HepG2 (cell line): ENCODE measurements at regions of chr12 and their contacts with region 1.

Region 1: GRCh38 chr12:12376646-12377448 is 20.0 kb downstream of the BORCS5 start:
- DNase-seq: peak; percentile 81
- ATAC-seq: peak; percentile 81
- H3K4me3 ChIP-seq: no peak overlapping the region
- H3K27ac ChIP-seq: no peak overlapping the region
- H3K4me1 ChIP-seq: peaks cover 61% of the 10 kb centered on the region
- H3K27me3 ChIP-seq: no peaks in the 10 kb centered on the region
- CTCF ChIP-seq: peak; percentile 80
- EP300 ChIP-seq: no peak
- POLR2A ChIP-seq: no peak
- RAD21 ChIP-seq: peak; percentile 91

Region 2: GRCh38 chr12:12486661-12487240 is 109.9 kb after region 1 on chr12:
- CTCF ChIA-PET with region 1: no interaction called
- POLR2A ChIA-PET with region 1: no interaction called
- in situ Hi-C with region 1: no loop called
- intact Hi-C with region 1: loop called (anchors 5 kb)
- DNase-seq: peak; percentile 39
- ATAC-seq: peak; percentile 71
- H3K4me3 ChIP-seq: no peak overlapping the region
- H3K27ac ChIP-seq: peak overlapping the region; percentile 70
- H3K4me1 ChIP-seq: peaks cover 53% of the 10 kb centered on the region
- H3K27me3 ChIP-seq: no peaks in the 10 kb centered on the region
- CTCF ChIP-seq: no peak
- EP300 ChIP-seq: peak in 1 of 2 experiments; percentile 50; a peak in 2 of 4 replicates
- POLR2A ChIP-seq: no peak
- RAD21 ChIP-seq: 0 out of 2 replicates have a peak, but pooled peaks have one; percentile 13

Region 3: GRCh38 chr12:12562585-12563261 is 185.9 kb after region 1 on chr12 and contains the start of gene DUSP16:
- CTCF ChIA-PET with region 1: interaction called, 21 read pairs
- POLR2A ChIA-PET with region 1: interaction called, 5 read pairs
- in situ Hi-C with region 1: no loop called
- intact Hi-C with region 1: loop called (anchors 1 kb)
- DNase-seq: peak; percentile 96
- ATAC-seq: peak; percentile 95
- H3K4me3 ChIP-seq: peak within 1 kb of the TSS; percentile 79 to 90 (median 87)
- H3K27ac ChIP-seq: peak within 1 kb of the TSS; percentile 93
- H3K4me1 ChIP-seq: peaks cover 29% of the 10 kb centered on the region
- H3K27me3 ChIP-seq: no peaks in the 10 kb centered on the region; a peak in 1 of 5 replicates
- CTCF ChIP-seq: peak; percentile 47
- EP300 ChIP-seq: no peak
- POLR2A ChIP-seq: peak; percentile 64 to 68
- RAD21 ChIP-seq: peak; percentile 52
- total RNA-seq, gene DUSP16: 46.6 and 69.1 TPM in 2 replicates

Region 4: DNA sequence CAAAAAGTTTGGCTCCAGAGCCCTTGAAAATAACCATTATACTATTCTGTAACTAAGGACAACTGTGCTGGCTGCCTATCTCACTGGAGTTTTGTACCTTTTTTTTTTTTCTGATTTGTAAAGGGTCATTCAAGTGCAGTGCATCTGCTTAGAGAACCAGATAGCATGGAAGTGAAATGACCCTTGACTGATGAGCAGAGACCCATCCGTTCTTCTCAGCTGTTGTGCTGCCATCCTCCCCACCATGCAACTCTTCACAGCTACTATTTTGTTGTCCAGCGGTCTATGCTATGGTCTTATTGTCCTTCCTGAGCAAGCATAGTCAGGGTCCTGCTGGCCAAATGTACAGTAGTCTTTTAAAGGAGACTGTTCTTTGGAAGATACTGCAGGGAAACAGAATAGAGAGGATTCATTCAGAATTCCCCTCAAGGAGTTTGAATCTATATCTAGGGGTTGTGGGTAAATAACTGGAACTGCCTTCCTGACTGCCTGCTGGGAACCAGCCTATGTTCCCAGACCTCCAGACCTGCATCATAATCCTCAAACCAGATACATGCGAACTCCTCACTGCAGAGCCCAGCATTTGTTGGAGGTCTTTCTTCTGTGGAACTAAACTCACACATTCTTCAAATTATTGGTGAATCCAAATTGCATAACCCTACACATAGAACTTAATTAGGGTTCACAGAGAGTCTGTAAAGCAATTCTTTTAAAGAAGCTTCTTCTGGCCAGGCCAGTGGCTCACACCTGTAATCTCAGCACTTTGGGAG is 278.0 kb after region 1 on chr12:
- CTCF ChIA-PET with region 1: interaction called, 11 read pairs
- POLR2A ChIA-PET with region 1: no interaction called
- in situ Hi-C with region 1: no loop called
- intact Hi-C with region 1: loop called (anchors 1 kb)
- DNase-seq: no peak
- ATAC-seq: no peak
- H3K4me3 ChIP-seq: no peak overlapping the region
- H3K27ac ChIP-seq: no peak overlapping the region
- H3K4me1 ChIP-seq: peaks cover 13% of the 10 kb centered on the region
- H3K27me3 ChIP-seq: no peaks in the 10 kb centered on the region
- CTCF ChIP-seq: no peak
- EP300 ChIP-seq: no peak
- POLR2A ChIP-seq: no peak
- RAD21 ChIP-seq: no peak

Region 5: GRCh38 chr12:12661086-12661485 is 284.2 kb after region 1 on chr12:
- CTCF ChIA-PET with region 1: interaction called, 11 read pairs
- POLR2A ChIA-PET with region 1: no interaction called
- in situ Hi-C with region 1: no loop called
- intact Hi-C with region 1: loop called (anchors 1 kb)
- DNase-seq: no peak
- ATAC-seq: no peak
- H3K4me3 ChIP-seq: no peak overlapping the region
- H3K27ac ChIP-seq: no peak overlapping the region
- H3K4me1 ChIP-seq: no peaks in the 10 kb centered on the region
- H3K27me3 ChIP-seq: no peaks in the 10 kb centered on the region
- CTCF ChIP-seq: no peak
- EP300 ChIP-seq: no peak
- POLR2A ChIP-seq: no peak
- RAD21 ChIP-seq: no peak

Region 6: DNA sequence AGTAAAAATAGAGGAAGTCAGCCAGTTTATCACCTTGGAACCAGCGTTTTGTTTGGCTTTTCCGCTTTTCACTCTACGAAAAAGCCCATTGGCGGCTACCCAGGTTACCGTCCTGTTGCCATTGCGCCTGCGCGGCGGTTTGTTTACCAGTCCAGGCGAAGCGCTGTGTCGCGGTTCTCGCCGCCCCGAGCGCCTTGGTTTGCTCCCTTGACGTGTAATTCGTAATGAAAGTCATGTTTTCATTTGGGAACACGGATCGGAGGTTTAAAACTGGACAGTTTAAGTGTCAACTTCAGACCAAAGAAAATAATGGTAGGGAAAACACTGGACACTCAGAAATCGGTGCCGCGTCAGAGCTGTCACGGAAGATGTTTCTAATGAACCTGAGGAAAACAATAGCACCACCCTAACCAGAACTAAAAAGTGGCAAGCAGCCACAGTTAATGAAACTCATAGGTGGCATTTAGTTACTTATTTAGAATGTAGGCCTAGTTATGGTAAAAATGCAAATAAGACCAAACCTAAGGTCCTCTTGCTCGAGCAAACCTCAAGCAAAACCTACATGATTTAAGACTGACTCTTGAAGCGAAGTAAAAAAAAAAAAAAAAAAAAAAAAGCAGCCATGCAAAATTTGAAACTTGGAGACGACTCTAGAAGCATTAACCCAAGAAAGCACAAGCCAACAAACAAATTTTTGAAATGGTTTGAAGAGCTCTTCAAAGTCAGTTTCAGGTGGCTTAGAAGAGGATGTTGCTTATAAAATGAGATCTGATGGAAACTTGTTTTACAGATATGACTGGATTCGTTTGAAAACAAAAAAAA is 319.9 kb after region 1 on chr12:
- CTCF ChIA-PET with region 1: no interaction called
- POLR2A ChIA-PET with region 1: no interaction called
- in situ Hi-C with region 1: no loop called
- intact Hi-C with region 1: loop called (anchors 1 kb)
- DNase-seq: peak; percentile 73
- ATAC-seq: peak; percentile 95
- H3K4me3 ChIP-seq: peak overlapping the region; percentile 66 to 68 (median 67)
- H3K27ac ChIP-seq: peak overlapping the region; percentile 87
- H3K4me1 ChIP-seq: peaks cover 18% of the 10 kb centered on the region
- H3K27me3 ChIP-seq: no peaks in the 10 kb centered on the region; a peak in 1 of 5 replicates
- CTCF ChIP-seq: no peak
- EP300 ChIP-seq: no peak
- POLR2A ChIP-seq: peak; percentile 30 to 58; a peak in 3 of 4 replicates
- RAD21 ChIP-seq: no peak

Region 7: DNA sequence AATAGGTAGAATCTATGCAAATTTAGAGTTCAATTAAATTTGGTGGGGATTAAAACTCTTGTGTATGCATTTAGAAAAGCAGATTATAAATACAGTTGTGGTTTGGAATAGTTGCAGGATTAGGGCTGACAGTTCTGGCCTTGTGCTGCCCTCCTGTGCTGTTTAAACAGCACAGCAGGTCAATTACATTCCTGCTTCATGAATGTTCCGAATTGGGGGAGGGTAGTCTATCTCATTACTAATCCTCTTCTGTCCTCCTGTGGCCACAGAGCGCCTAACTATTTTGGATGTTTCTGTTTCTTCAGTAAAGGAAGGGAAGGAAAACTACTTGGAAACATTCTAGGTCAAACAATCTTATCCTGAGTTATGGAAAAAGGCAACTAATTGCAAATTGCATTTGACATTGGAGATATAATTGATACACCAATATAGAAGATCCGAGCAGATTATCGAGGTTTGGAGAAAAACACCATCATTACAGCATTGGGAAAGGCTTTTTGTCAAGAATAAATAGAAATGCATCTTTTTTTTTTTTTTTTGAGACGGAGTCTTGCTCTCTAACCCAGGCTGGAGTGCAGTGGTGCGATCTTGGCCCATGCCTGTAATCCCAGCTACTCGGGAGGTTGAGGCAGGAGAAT is 327.9 kb after region 1 on chr12:
- CTCF ChIA-PET with region 1: interaction called, 22 read pairs
- POLR2A ChIA-PET with region 1: no interaction called
- in situ Hi-C with region 1: loop called (anchors 5 kb)
- intact Hi-C with region 1: loop called (anchors 1 kb)
- DNase-seq: peak; percentile 92
- ATAC-seq: peak; percentile 99
- H3K4me3 ChIP-seq: peak overlapping the region in 1 of 3 experiments; percentile 6; a peak in 1 of 6 replicates
- H3K27ac ChIP-seq: no peak overlapping the region
- H3K4me1 ChIP-seq: peaks cover 25% of the 10 kb centered on the region
- H3K27me3 ChIP-seq: no peaks in the 10 kb centered on the region; a peak in 1 of 5 replicates
- CTCF ChIP-seq: peak; percentile 92
- EP300 ChIP-seq: no peak; a peak in 1 of 4 replicates
- POLR2A ChIP-seq: no peak
- RAD21 ChIP-seq: peak; percentile 98